Prostate gland (tissue), 2 donors: ENCODE measurements at regions of chrX and their contacts with region 1.

Region 1: DNA sequence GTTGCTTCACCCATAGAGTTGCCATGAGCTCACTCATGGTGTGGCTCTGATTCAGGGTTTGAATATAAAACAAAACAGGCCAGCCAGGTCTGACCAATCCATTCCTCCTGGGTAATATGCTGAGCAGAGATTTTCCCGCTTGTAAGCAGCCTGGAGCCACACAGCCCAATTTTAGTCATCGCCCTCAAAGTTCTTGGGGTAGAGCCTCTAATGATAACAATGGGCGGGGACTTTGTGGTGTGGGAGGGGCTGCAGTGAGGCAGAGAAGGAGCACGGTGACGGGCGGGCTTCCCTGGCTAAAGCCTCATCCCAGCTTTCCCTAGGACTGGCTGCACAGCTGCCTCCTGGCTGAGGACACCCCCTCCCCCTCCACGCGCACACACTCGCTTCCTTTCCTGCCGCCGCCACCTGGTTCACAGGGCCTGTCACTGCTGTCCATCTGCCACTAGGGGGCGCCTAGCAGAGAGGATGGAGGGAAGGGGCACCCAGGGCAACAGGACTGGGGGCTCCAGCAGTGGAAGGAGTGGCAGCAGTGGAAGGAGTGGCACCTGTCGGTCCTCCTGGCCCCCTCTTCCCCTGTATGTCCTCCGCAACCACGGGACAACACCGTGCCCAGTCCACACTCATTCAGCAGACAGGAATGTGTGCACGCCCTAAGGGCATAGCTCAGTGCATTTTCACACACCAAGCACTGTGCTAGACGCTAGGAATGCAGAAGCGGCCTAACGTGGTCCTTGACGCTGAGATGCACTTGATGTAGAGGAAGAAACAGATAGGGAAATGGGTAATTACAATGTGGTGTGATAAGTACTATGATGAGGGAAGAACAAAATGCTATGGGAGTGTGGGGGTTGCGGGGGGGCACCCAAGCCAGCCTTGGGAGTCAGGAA is 26.8 kb downstream of the PRPS1 start:
- DNase-seq: no peak
- H3K4me3 ChIP-seq: no peak overlapping the region
- H3K27ac ChIP-seq: no peak overlapping the region
- H3K4me1 ChIP-seq: no peaks in the 10 kb centered on the region
- H3K27me3 ChIP-seq: no peaks in the 10 kb centered on the region
- CTCF ChIP-seq: peak in 3 of 4 experiments; percentile 16 to 46 (median 33)
- POLR2A ChIP-seq: no peak

Region 2: GRCh38 chrX:107894038-107894437 is 238.9 kb after region 1 on chrX:
- intact Hi-C with region 1: loop called (anchors 5 kb)
- DNase-seq: peak; percentile 14
- H3K4me3 ChIP-seq: no peak overlapping the region
- H3K27ac ChIP-seq: no peak overlapping the region
- H3K4me1 ChIP-seq: no peaks in the 10 kb centered on the region
- H3K27me3 ChIP-seq: no peaks in the 10 kb centered on the region
- CTCF ChIP-seq: peak in 3 of 4 experiments; percentile 55 to 68 (median 62)
- POLR2A ChIP-seq: no peak